Activated B cell treated with CpG ODN at 0.5 μM for 24 hours (primary cell): ENCODE measurements at regions of chr3 and their contacts with region 1.

Region 1: GRCh38 chr3:177359593-177360357 is 162.5 kb upstream of the TBL1XR1 start:
- DNase-seq: peak; percentile 98
- ATAC-seq: peak; percentile 74
- H3K4me3 Mint-ChIP-seq: peak overlapping the region; percentile 85
- H3K27ac Mint-ChIP-seq: peak overlapping the region; percentile 98
- H3K4me1 Mint-ChIP-seq: peaks cover 67% of the 10 kb centered on the region
- H3K27me3 Mint-ChIP-seq: no peaks in the 10 kb centered on the region
- CTCF ChIP-seq: no peak

Region 2: DNA sequence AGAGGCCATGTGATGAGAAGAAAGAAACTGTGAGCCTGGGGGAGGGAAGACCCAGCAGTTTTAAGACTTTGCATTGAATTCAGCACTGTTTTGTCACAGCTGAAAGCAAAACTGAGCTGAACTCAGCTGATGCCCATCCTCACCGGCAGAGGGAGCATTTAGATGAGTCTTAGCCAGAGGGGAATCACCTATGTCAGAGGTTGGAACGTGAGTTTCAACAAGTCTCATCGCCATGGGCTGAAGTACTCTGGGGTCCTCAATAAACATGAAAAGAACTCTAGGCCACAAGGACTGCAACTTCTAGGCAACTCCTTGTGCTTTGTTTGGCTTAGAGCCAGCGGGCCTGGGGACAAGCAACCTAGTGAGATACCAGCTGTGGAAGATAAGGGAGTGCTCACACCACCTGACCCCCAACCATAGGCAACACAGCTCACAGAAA is 487.0 kb before region 1 on chr3:
- CTCF ChIA-PET with region 1: interaction called, 3 read pairs
- POLR2A ChIA-PET with region 1: no interaction called
- intact Hi-C with region 1: loop called (anchors 5 kb)
- DNase-seq: peak; percentile 27
- ATAC-seq: peak; percentile 82
- H3K4me3 Mint-ChIP-seq: no peak overlapping the region
- H3K27ac Mint-ChIP-seq: no peak overlapping the region
- H3K4me1 Mint-ChIP-seq: peaks cover 2% of the 10 kb centered on the region
- H3K27me3 Mint-ChIP-seq: peaks cover 5% of the 10 kb centered on the region
- CTCF ChIP-seq: no peak

Region 3: DNA sequence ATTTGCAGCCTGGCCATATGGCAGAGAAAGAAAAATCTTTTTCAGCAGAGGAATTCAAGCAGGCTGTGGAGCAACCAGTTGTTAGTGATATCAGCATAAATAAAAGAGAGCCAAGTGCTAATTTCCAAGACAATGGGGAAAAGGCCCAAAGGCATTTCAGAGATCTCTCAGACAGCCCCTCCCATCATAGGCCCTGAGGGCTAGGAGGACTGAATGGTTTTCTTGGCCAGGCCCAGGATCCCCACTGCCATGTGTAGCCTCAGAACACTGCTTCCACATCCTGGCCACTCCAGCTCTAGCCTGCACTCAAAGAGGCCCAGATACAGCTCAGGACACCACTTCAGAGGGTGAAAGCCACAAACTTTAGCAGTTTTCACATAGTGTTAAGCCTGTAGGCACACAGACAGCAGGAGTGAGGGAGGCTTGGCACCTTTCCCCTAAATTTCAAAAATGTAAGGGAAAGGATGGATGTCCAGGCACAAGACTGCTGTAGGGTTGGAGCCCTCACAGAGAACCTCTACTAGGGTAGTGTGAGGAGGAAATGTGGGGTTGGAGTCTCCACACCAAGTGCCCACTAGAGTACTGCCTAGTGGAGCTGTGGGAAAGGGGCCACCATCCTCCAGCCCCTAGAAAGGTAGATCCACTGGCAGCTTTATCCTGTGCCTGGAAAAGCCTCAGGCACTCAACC is 353.9 kb before region 1 on chr3:
- CTCF ChIA-PET with region 1: no interaction called
- POLR2A ChIA-PET with region 1: no interaction called
- intact Hi-C with region 1: no loop called
- DNase-seq: no peak
- ATAC-seq: no peak
- H3K4me3 Mint-ChIP-seq: no peak overlapping the region
- H3K27ac Mint-ChIP-seq: no peak overlapping the region
- H3K4me1 Mint-ChIP-seq: no peaks in the 10 kb centered on the region
- H3K27me3 Mint-ChIP-seq: no peaks in the 10 kb centered on the region
- CTCF ChIP-seq: no peak

Region 4: DNA sequence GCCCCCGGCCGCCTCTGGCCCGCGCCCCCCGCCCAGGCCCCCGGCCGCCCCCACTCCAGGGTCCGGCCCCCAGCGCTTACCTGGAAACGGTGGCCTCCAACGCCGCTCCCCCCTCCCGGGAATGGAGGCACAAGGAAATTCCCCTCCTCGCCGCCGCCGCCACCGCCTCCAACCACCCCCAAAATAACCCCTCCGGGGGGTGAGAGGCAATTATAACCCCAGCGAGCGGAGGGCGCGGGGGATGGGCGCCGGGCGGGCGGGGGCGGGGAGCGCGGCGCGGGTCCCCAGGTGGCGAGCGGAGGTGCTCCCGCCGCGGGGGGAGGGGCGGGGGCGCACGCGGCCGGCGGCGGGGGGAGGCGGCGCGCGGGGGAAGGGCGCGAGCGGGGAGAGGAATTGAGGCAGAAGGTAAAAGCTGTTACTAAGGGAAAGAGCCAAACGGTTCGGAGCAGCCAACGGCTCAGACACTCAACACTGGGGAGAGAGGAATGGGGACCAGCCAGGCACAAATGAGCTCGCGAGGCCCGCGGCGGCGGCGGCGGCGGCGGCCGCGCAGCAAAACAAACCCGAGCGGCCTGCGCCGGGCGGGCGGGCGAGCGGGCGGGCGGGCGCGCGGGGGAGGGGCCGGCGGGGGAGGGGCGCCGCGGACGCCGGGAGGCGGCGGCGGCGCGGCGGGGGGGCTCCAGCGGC is 162.6 kb before region 1 on chr3 and contains the start of gene TBL1XR1:
- CTCF ChIA-PET with region 1: interaction called, 29 read pairs
- POLR2A ChIA-PET with region 1: interaction called, 247 read pairs
- intact Hi-C with region 1: loop called (anchors 1 kb)
- DNase-seq: peak; percentile 80
- ATAC-seq: peak; percentile 58
- H3K4me3 Mint-ChIP-seq: peak within 1 kb of the TSS; percentile 97
- H3K27ac Mint-ChIP-seq: peak within 1 kb of the TSS; percentile 97
- H3K4me1 Mint-ChIP-seq: peaks cover 59% of the 10 kb centered on the region
- H3K27me3 Mint-ChIP-seq: no peaks in the 10 kb centered on the region
- CTCF ChIP-seq: no peak
- total RNA-seq, gene TBL1XR1: 312 and 372 TPM in 2 replicates

Region 5: DNA sequence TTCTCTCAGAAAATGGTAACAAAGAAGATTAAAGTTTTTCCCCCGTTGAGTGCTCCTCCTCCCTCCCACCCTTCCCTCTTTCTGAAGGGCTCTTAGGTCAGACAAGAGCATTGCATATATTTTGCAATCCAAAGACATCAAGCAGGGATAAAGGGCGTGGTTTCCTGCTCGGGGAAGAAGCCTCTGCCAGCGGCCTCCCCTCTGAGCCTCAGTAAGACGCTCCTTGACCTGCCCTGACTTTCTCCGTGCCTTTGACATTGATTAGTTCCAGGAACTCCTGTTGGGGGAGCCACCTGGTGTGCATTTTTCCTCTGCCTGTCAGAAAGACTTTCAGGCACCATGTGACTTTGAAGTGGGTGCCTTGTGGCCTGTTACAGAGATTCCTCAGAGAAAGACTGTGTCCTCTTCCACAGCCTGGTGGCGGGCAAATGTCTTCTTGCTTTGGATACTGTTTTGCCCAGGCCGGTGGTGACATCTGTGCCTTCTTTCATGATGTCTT is 75.3 kb before region 1 on chr3:
- CTCF ChIA-PET with region 1: no interaction called
- POLR2A ChIA-PET with region 1: no interaction called
- intact Hi-C with region 1: loop called (anchors 2 kb)
- DNase-seq: no peak
- ATAC-seq: no peak
- H3K4me3 Mint-ChIP-seq: no peak overlapping the region
- H3K27ac Mint-ChIP-seq: no peak overlapping the region
- H3K4me1 Mint-ChIP-seq: peaks cover 23% of the 10 kb centered on the region
- H3K27me3 Mint-ChIP-seq: no peaks in the 10 kb centered on the region
- CTCF ChIP-seq: no peak

Region 6: DNA sequence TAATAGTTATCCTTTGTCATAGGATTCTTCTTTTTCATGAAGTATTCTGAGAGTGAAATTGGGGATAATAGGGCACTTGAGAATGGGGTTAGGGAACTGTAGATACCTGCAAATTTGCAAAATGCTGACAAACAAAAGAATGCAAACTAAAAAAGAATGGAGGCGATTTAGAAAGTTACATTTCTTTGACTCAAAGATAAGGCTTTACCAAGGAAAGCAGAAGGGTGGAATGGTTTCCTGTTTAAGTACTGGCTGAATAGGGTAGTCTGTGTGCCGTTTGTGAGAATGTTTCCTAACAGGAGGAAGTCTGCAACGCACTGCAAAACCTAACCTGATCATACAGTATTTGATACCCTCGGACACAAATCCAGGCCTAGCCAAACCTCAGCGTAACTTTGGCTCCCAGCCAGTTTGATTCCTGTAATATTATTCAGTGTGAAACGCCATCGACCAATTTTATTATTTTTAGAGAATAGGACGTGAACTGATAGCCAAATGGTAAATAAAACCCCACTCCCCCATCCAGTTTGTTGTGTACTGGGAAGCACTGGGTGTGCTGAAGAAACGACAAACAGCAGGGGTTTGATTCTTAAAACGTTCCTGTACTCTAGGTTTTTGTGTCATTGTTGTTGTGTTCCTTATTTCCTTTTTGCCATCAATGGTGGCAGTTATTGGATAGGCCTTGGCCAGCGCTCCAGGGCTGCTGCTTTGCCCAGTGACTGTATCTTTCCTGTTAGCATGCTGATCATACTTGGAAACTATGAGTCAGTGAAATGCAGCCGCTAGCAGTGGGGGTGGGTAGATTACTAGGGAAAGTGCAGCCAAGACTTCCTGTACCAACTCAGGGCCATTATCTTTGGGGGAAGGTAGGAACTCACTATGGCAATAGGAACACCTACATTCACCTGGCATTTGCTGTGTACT is 14.5 kb before region 1 on chr3:
- CTCF ChIA-PET with region 1: no interaction called
- POLR2A ChIA-PET with region 1: interaction called, 49 read pairs
- intact Hi-C with region 1: no loop called
- DNase-seq: no peak
- ATAC-seq: peak; percentile 92
- H3K4me3 Mint-ChIP-seq: peak overlapping the region; percentile 61
- H3K27ac Mint-ChIP-seq: peak overlapping the region; percentile 89
- H3K4me1 Mint-ChIP-seq: peaks cover 71% of the 10 kb centered on the region
- H3K27me3 Mint-ChIP-seq: no peaks in the 10 kb centered on the region
- CTCF ChIP-seq: no peak

Region 7: GRCh38 chr3:177426878-177427495 is 67.2 kb after region 1 on chr3:
- CTCF ChIA-PET with region 1: no interaction called
- POLR2A ChIA-PET with region 1: interaction called, 6 read pairs
- intact Hi-C with region 1: loop called (anchors 1 kb)
- DNase-seq: no peak
- ATAC-seq: peak; percentile 92
- H3K4me3 Mint-ChIP-seq: peak overlapping the region; percentile 8
- H3K27ac Mint-ChIP-seq: peak overlapping the region; percentile 76
- H3K4me1 Mint-ChIP-seq: peaks cover 16% of the 10 kb centered on the region
- H3K27me3 Mint-ChIP-seq: no peaks in the 10 kb centered on the region
- CTCF ChIP-seq: no peak

Region 8: DNA sequence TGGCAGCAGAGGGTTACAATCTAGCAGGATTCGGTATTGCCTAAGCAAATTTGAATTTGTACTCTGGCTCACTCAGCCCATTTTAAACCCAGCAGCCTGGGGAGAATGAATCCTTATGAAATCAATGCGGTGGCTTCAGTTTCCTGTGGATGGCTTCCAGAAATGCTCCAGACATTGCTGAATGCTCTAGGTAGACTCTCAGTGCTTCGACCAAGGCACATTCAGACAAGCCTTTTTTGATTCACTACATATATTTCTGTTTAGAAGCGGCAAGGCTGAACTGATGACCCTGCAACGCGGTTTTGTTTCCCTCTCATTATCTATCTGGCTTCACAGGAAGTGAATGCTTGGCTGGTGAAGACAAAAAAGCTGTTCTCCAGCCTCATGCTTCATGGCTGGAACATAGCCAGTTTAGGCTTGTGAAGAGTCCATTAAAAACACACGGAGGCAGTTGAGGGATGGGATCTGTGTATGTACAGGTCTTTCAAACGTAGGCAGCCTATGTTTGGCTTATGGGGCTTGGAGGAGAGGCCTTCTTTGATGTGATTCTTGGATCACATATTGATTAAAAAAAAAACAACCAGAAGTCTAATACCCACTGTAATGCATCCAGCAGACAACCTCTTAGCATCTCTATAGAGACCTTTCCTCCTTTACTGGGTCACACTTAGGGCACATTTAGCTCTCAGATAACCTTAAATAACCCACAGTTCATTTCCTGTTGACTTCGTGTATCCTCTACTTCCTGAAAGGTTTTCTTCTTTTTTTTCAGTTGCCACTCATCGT is 237.7 kb after region 1 on chr3:
- CTCF ChIA-PET with region 1: no interaction called
- POLR2A ChIA-PET with region 1: no interaction called
- intact Hi-C with region 1: no loop called
- DNase-seq: no peak
- ATAC-seq: peak; percentile 84
- H3K4me3 Mint-ChIP-seq: peak overlapping the region; percentile 68
- H3K27ac Mint-ChIP-seq: peak overlapping the region; percentile 83
- H3K4me1 Mint-ChIP-seq: peaks cover 56% of the 10 kb centered on the region
- H3K27me3 Mint-ChIP-seq: no peaks in the 10 kb centered on the region
- CTCF ChIP-seq: no peak

Region 9: DNA sequence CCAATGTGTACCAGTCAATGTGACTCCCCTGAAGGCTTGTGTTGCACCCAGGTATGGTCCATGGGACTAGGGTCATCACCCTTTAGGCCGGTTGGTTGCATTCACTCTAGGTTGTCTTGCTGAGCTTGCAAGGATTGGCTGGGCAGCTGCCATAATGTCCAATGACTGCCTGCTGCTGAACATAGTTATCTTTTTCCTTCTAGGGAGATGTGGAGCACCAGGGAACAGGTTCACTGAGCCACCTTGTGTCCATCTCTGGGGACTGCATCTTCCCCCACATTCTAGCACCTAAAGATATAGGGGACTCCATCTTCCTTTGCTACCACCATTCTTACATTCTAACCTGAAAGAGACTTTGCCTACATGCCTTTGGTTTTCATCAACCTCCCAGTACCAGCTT is 417.9 kb after region 1 on chr3:
- CTCF ChIA-PET with region 1: interaction called, 7 read pairs
- POLR2A ChIA-PET with region 1: interaction called, 5 read pairs
- intact Hi-C with region 1: loop called (anchors 1 kb)
- DNase-seq: no peak
- ATAC-seq: peak; percentile 75
- H3K4me3 Mint-ChIP-seq: no peak overlapping the region
- H3K27ac Mint-ChIP-seq: no peak overlapping the region
- H3K4me1 Mint-ChIP-seq: peaks cover 18% of the 10 kb centered on the region
- H3K27me3 Mint-ChIP-seq: no peaks in the 10 kb centered on the region
- CTCF ChIP-seq: no peak